ENCODE measurements at regions of chr14 and their contacts with region 1.

Region 1: DNA sequence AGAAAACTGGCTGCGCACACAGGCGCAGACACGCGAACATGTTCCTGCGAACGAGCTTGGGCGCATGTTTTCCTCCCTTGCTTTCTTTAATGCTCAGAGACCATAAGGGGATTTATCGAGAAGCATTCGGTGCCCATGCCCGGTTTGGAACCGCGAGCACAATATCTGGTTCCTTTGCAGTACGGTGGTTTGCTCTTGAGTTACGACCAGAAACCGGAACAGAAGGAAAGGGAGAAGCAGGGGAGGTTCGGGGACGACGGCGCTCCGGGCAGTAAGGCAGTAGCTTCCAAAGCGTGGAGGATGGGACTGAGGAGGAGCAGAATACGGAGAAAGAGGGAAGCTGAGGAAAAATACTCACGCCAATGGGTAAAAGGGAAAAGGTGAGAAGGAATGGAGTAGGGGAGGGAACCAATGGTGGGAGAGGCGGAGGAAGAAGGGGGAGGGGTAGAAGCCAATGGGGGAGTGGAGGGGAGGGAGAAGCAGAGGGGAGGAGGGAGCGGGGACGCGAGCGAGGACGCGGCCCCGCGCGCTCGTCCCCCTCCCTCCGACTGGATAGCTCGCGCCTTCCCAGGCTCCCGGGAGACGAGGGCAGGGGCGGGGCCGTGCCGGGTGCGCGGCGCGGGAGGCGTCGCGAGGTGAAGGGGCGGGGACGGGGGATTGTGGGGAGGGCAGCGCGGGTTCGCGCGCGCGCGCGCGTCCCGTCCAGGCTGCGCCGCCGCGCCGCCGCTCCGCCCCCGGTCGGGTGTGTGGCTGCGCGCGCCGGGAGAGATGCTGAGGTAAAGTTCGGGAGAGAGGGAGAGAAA is 625 bp upstream of the ARHGAP5 start:
- DNase-seq: peak; percentile 97
- ATAC-seq: peak; percentile 96

Region 2: DNA sequence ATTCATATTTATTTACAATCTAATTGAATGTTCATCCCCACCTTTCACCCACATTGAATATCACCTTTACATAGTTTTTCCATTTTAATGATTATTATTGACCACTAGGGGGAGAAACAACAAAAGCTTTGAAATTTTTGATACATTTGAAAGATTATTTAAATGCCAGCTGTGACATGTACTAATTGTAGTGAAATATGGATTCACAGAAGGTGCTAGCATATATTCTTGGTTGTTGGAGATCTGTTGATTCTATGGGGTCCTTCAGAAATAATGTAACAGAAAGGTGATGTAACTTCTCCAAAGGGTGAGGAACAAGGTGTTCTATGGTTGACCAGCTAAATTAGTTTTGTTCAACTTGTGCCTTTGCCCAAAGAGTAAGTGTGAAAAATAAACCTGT is 566.3 kb before region 1 on chr14:
- intact Hi-C with region 1: loop called (anchors 10 kb)
- DNase-seq: no peak
- ATAC-seq: no peak

Region 3: DNA sequence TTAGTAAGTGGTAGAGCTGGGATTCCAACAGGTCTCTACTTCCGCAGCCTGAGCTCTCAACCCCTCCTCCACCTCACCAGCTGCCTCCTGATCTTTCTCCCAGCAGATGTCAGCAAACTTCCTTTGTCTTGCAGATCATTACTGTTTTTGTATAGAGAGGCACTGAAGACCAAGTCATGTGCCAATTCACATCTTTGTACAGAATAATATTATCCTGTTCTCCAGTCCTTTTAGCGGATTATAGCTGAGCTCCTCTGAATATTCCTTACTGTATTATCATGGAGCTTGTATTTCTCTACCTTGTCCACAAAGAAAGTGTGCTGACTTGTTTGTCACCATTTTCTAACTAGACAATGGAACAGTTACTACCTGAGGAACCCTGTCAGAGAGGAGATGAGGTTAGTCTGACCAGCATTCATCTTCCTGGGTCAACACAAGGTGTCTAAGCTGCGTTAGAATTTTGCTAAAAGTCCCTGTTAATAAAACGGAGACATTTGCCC is 141.7 kb before region 1 on chr14:
- intact Hi-C with region 1: loop called (anchors 1 kb)
- DNase-seq: no peak
- ATAC-seq: peak; percentile 78

Region 4: DNA sequence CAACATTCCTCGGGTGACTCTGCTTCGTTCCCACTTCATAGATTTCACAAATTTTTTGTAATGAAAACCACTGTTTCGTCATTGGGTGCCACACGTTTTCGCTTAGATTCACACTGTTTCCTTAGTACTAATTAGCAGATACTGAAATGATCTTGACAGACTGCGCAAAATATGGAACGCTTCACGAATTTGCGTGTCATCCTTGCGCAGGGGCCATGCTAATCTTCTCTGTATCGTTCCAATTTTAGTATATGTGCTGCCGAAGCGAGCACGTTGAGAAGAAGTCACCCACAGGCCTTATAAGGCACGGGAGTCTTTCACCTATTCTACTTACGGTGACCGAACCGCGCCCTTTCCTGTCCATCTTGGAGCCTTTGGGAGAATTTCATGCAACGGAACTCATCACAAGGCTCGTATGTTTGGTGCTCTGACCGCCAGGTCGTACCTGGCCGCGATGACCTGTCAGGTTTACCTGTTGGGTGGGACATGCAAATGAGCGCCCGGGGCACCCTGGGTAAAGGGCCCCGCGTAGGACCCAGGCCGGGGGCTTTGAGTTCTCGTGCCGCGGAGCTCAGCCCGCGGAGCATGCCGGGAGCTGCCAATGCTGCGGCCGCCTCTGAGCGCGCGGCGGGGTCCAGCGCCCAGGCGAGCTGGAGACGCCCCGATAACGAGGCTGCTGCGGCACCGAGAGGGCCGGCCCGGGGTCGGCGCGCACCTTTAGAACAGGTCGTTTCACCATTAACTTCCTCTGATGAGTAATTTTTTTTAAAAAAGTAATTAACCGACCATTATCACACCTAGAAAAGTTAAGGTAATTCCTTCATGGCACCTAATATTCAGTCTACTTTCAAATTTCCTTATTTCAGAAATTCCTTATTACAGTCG is 126.8 kb after region 1 on chr14 and contains the start of gene RNU6-8:
- intact Hi-C with region 1: loop called (anchors 1 kb)
- DNase-seq: peak; percentile 91
- ATAC-seq: peak; percentile 95
- total RNA-seq, gene RNU6-8: not detected

Region 5: GRCh38 chr14:32469388-32470160 is 393.1 kb after region 1 on chr14:
- intact Hi-C with region 1: loop called (anchors 2 kb)
- DNase-seq: no peak
- ATAC-seq: no peak

Measured in Right ventricle myocardium inferior (tissue), 1 donor.